Natural killer cell (primary cell): ENCODE measurements at regions of chr15 and their contacts with region 1.

Region 1: GRCh38 chr15:38225381-38225780 is 27.3 kb upstream of the SPRED1 start:
- DNase-seq: no peak
- ATAC-seq: no peak
- H3K4me3 ChIP-seq: no peak overlapping the region
- H3K4me3 Mint-ChIP-seq: no peak overlapping the region
- H3K27ac ChIP-seq: no peak overlapping the region
- H3K27ac Mint-ChIP-seq: no peak overlapping the region
- H3K4me1 ChIP-seq: no peaks in the 10 kb centered on the region
- H3K4me1 Mint-ChIP-seq: no peaks in the 10 kb centered on the region
- H3K27me3 ChIP-seq: no peaks in the 10 kb centered on the region
- H3K27me3 Mint-ChIP-seq: peaks cover 0 to 5% of the 10 kb centered on the region in 2 donors
- CTCF ChIP-seq: no peak

Region 2: DNA sequence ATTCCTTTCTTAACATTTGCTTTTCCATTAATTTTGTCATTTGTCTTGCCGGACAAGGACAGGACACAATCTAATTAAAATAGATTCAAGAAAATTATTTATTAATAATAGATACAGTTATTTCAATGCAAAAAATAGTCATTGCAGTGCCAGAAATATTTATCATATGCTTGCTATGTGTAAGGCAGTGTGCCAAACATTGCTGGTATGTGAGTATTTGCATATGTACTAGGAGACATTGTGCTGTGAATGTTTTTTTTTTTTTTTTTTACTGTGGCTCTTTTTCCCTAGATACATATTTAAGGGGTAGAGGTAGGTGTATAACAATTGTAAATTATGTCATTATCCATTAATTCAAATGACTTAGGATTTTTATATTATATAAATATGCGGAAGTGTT is 50.6 kb after region 1 on chr15:
- intact Hi-C with region 1: loop called (anchors 2 kb)
- DNase-seq: no peak
- ATAC-seq: no peak
- H3K4me3 ChIP-seq: no peak overlapping the region
- H3K4me3 Mint-ChIP-seq: no peak overlapping the region
- H3K27ac ChIP-seq: no peak overlapping the region
- H3K27ac Mint-ChIP-seq: no peak overlapping the region
- H3K4me1 ChIP-seq: no peaks in the 10 kb centered on the region
- H3K4me1 Mint-ChIP-seq: peaks cover 0 to 4% of the 10 kb centered on the region in 2 donors
- H3K27me3 ChIP-seq: no peaks in the 10 kb centered on the region
- H3K27me3 Mint-ChIP-seq: peaks cover 0 to 2% of the 10 kb centered on the region in 2 donors
- CTCF ChIP-seq: no peak